ENCODE measurements at regions of chr4 and their contacts with region 1.

Region 1: DNA sequence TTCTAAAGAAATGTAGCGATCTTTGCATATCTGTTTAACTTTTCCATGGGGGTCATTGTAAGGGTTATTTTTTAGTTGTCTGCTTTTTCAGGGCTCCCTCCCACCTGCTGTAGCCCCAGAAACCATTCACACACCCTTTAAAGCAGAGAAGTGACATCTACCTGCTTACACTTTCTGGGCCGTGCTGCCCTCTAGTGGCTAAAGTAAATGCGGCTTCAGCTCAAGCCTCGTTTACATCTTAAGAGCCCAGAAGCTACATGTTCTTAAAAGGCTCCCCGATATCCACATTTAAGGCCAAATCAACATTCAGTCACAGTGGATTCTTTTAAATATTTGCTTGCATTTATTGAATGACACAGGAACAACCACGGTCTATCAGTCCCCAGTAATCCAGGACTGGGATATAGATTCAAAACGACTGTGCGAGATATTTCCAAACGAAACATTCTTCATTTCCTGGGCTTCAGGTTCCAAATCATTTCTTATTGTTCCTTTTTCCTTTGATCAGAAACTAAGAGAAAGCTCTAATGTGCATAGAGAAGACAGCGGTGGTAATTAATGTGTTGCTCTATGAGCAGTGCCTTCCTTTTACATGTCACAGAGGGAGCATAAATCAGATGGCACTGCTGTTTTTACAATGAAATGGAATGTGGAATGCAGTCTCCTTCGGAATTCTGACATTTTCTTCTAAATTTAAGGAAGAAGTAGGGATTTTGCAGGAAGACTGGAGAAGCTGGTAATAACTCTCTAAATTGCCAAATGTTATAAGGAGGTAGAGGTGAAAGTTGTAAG is 119.9 kb downstream of the RASGEF1B start:
- DNase-seq: peak; percentile 40
- H3K27ac ChIP-seq: no peak overlapping the region
- CTCF ChIP-seq: peak; percentile 90

Region 2: DNA sequence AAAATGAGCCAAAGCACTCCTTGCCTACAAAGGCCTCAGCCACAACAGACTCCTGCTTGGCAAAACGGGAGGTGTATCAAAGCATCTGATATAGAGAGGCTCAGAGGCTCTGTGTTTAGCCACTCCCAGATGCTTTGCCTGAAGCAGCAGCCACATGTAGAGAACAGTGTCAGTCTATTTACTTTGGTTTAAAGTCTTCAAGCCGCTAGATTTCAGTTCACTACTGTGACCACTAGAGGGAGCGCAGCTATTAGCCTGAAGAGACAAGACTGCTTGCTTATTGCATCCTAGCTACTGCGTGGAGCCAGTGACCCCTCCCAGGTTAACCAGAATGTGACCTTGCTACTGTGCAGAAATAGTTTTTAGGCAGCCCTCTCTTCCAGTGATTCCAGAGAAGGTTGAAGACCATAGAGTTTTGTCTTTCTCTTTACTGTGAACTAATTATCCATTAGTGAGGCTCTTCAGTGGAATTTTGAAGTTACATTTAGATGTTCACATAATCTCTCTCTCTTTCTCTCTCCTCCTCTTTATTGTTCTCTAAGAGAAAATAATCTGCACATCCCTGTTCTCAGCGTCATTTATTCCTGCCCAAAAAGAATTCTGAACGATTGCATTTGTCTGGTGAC is 282.0 kb before region 1 on chr4:
- CTCF ChIA-PET with region 1: interaction called, 24 read pairs
- POLR2A ChIA-PET with region 1: no interaction called
- DNase-seq: peak; percentile 42
- H3K27ac ChIP-seq: no peak overlapping the region
- CTCF ChIP-seq: peak; percentile 89

Region 3: GRCh38 chr4:81084029-81084428 is 267.8 kb before region 1 on chr4:
- CTCF ChIA-PET with region 1: interaction called, 21 read pairs
- POLR2A ChIA-PET with region 1: no interaction called
- DNase-seq: peak; percentile 18
- H3K27ac ChIP-seq: no peak overlapping the region
- CTCF ChIP-seq: no peak